A673 (cell line): ENCODE measurements at regions of chr1 and their contacts with region 1.

Region 1: GRCh38 chr1:98053471-98054366 is 132.9 kb upstream of the DPYD start:
- DNase-seq: peak; percentile 88
- H3K4me3 ChIP-seq: peak overlapping the region; percentile 65
- H3K27ac ChIP-seq: peak overlapping the region; percentile 59
- H3K4me1 ChIP-seq: peaks cover 40% of the 10 kb centered on the region
- H3K27me3 ChIP-seq: peaks cover 8% of the 10 kb centered on the region
- CTCF ChIP-seq: peak; percentile 76

Region 2: DNA sequence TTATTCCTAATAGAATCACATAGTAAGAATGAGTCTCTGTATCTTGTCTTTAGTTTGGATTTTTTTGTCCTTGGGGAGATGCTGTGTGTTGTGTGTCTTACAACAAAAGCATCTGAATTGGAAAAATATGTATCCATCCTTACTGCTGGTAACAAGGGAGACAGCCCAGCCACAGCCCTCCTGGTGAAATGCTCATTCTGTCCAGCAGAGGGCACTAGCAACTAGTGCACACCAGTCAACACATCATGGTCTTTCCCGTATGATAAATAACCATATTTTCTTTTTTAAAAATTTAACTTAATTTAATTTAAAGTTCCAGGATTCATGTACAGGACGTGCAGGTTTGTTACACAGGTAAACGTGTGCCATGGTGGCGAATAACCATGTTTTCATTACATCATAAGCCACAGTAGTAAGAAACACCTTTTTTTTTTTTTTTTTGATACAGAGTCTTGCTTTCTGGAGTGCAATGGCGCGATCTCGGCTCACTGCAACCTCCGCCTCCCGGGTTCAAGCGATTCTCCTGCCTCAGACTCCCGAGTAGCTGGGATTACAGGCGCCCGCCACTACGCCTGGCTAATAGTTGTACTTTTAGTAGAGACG is 1087.1 kb before region 1 on chr1:
- CTCF ChIA-PET with region 1: no interaction called
- POLR2A ChIA-PET with region 1: no interaction called
- intact Hi-C with region 1: loop called (anchors 5 kb)
- DNase-seq: peak; percentile 86
- H3K4me3 ChIP-seq: no peak overlapping the region
- H3K27ac ChIP-seq: peak overlapping the region; percentile 58
- H3K4me1 ChIP-seq: peaks cover 20% of the 10 kb centered on the region
- H3K27me3 ChIP-seq: no peaks in the 10 kb centered on the region
- CTCF ChIP-seq: peak; percentile 95

Region 3: GRCh38 chr1:97243973-97244560 is 809.7 kb before region 1 on chr1:
- CTCF ChIA-PET with region 1: no interaction called
- POLR2A ChIA-PET with region 1: no interaction called
- intact Hi-C with region 1: loop called (anchors 2 kb)
- DNase-seq: peak; percentile 42
- H3K4me3 ChIP-seq: no peak overlapping the region
- H3K27ac ChIP-seq: no peak overlapping the region
- H3K4me1 ChIP-seq: no peaks in the 10 kb centered on the region
- H3K27me3 ChIP-seq: no peaks in the 10 kb centered on the region
- CTCF ChIP-seq: peak; percentile 70

Region 4: DNA sequence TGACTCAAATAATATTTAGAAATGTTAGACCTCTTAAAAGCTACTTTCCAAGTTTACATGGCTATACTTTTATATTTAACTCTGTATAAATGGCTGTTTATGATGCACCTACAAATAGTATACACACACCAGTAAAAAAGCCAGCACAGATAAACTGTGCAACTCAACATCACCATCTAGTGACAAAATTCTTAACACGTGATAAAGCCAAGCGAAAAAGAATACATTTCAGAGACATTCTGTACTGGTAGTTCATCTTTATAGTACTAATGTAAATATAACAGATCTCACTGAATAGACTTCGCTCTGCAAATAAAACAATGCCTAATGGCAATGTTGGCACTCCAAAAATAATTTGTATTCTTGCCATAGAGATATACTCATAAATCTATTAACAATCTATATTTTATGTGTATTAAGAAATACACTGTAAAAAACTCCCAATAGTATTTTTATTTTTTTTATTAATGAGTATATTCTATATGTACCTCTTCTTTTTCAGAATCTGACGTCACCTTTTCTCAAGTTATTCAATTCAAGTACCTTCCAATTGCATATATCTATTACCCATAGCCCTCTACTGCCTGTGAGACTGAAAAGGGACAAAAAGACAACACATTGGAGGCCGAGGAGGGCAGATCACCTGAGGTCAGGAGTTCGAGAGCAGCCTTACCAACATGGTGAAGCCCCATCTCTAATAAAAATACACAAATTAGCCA is 233.1 kb before region 1 on chr1:
- CTCF ChIA-PET with region 1: no interaction called
- POLR2A ChIA-PET with region 1: no interaction called
- intact Hi-C with region 1: loop called (anchors 5 kb)
- DNase-seq: peak; percentile 71
- H3K4me3 ChIP-seq: no peak overlapping the region
- H3K27ac ChIP-seq: no peak overlapping the region
- H3K4me1 ChIP-seq: no peaks in the 10 kb centered on the region
- H3K27me3 ChIP-seq: no peaks in the 10 kb centered on the region
- CTCF ChIP-seq: peak; percentile 69